HEK293T (cell line): ENCODE measurements at regions of chr1 and their contacts with region 1.

Region 1: GRCh38 chr1:46442317-46443161 is 47.1 kb upstream of the DMBX1 start:
- DNase-seq: peak; percentile 82

Region 2: GRCh38 chr1:46431691-46432090 is 10.8 kb before region 1 on chr1:
- CTCF ChIA-PET with region 1: interaction called, 11 read pairs
- POLR2A ChIA-PET with region 1: interaction called, 13 read pairs
- DNase-seq: no peak

Region 3: DNA sequence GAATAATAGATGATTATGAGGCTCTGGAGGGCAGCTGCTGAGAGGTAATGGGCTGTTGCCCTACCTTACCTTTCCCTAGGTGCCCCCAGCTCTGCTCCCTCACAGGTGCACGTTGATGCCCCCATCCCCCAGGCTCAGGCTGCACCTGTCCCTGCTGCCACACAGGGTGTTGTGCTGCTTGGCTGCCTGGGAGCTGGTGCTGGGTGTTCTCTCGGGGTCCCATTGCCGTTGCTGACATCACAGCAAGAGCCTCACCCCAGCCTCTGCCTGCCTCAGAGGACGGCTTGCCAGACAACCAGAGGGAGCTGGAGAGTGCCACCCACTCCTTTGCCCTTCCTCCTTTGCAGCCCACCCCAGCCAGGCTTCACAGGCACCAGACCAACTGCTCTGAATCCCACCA is 15.7 kb after region 1 on chr1:
- CTCF ChIA-PET with region 1: interaction called, 13 read pairs
- POLR2A ChIA-PET with region 1: no interaction called
- DNase-seq: no peak

Region 4: DNA sequence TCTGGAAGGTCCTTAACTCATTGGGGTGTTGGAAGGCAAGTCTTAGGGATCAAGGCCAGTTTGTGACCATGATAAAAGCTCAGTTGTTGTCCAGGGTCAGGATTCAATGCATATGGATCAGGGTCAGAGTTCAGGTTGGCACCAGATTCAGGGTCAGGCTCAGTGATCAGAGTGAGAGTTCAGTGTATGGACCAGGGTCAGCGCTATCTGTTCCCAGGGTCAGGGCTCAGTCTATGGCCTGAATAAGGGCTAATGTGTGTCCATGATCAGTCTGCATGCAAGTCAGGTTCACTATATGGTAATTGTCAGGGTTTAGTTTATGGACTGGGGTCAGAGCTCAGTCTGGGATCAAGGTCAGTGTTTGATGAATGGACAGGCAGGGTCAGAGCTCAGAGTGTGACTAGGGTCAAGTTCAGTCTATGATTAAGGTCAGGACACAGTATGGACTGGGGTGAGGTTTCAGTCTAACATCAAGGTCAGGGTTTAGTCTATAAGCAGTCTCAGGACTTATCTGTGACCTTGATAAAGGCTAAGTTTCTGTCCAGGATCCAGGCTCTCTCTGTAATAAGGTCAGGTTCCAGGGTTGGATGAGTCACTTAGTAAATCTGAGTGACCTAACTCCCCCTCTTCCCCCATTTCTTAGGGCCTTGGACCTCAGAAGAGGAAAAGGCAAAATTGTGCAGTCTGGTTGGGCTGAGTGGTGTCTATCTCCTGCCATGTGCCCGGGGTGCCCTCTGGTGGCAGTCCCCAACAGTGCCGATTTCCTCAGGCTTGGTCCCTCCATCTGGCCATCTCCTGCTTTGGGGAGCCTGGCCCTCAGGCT is 85.1 kb after region 1 on chr1:
- CTCF ChIA-PET with region 1: interaction called, 82 read pairs
- POLR2A ChIA-PET with region 1: interaction called, 3 read pairs
- DNase-seq: peak; percentile 85

Region 5: GRCh38 chr1:46539972-46540371 is 97.4 kb after region 1 on chr1:
- CTCF ChIA-PET with region 1: interaction called, 10 read pairs
- POLR2A ChIA-PET with region 1: no interaction called
- DNase-seq: no peak